ENCODE measurements at regions of chr11 and their contacts with region 1.

Region 1: DNA sequence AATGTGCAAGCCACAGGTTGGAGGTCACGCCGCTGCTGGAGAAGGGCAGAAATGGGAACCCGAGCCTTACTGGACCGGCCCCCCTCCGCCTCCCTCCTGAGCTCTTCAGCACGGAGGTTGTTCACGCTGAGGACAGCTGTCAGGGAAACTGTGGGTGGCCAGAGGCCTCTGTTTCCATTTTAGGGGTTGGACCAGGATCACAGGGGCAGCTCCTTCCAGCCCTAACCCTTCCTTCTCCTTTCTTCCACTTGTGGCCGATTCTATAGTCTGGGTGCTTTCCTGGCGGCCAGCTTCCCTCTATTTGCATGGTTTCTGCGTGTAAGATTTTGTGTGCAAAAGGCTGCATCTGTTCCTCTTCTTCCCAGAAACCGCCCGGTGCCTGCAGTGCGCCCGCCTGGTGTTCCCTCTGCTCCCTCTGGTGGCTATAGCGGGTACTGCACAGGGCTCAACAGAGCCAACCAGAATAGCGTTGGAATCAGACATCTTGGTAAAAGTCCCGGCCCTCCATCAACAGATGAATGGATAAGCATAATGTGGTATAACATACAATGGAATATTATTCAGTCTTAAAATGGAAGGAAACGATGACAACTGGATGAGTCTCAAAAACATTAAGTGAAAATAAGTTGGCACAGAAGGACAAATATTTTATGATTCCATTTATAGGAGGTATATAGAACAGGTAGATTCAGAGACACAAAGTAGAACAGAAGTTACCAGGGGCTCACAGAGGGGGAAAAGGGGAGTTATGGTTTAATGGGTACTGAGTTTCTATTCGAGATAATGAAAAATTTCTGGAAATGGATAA is 8.4 kb upstream of the SLC22A8 start:
- DNase-seq: peak; percentile 82
- ATAC-seq: peak; percentile 90
- H3K4me3 ChIP-seq: no peak overlapping the region
- H3K4me3 Mint-ChIP-seq: no peak overlapping the region
- H3K27ac ChIP-seq: no peak overlapping the region
- H3K27ac Mint-ChIP-seq: no peak overlapping the region
- H3K4me1 ChIP-seq: peaks cover 0 to 3% of the 10 kb centered on the region in 2 donors
- H3K4me1 Mint-ChIP-seq: peaks cover 4% of the 10 kb centered on the region
- H3K27me3 ChIP-seq: peaks cover 0 to 13% (median 0%) of the 10 kb centered on the region in 4 experiments
- H3K27me3 Mint-ChIP-seq: peaks cover 32% of the 10 kb centered on the region
- CTCF ChIP-seq: peak; percentile 100

Region 2: DNA sequence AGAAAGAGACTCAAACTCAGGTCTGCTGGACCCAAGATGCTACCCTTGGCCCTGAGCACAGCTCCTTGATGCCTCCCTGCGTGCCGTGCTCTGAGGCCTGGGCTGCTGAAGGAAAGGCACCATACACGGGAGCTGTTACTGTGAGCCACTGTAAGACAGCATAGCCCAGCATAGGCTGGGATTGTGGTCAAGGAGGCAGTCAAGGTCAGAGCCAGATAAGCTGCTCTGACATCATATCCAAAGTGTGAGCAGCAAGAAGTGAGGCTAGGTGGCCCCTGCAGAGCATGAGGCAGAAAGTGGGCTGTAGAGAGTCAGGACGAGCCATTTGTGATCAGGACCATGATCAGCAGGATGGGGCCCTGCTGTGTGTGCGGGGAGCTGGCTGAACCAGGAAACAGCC is 16.1 kb before region 1 on chr11:
- CTCF ChIA-PET with region 1: interaction called, 20 read pairs
- POLR2A ChIA-PET with region 1: no interaction called
- intact Hi-C with region 1: no loop called
- DNase-seq: no peak
- ATAC-seq: no peak
- H3K4me3 ChIP-seq: no peak overlapping the region
- H3K4me3 Mint-ChIP-seq: no peak overlapping the region
- H3K27ac ChIP-seq: no peak overlapping the region
- H3K27ac Mint-ChIP-seq: no peak overlapping the region
- H3K4me1 ChIP-seq: no peaks in the 10 kb centered on the region
- H3K4me1 Mint-ChIP-seq: no peaks in the 10 kb centered on the region
- H3K27me3 ChIP-seq: no peaks in the 10 kb centered on the region
- H3K27me3 Mint-ChIP-seq: peaks cover 21% of the 10 kb centered on the region
- CTCF ChIP-seq: no peak

Region 3: GRCh38 chr11:63132985-63133775 is 109.1 kb after region 1 on chr11:
- CTCF ChIA-PET with region 1: no interaction called
- POLR2A ChIA-PET with region 1: no interaction called
- intact Hi-C with region 1: no loop called
- DNase-seq: no peak
- ATAC-seq: no peak
- H3K4me3 ChIP-seq: no peak overlapping the region
- H3K4me3 Mint-ChIP-seq: no peak overlapping the region
- H3K27ac ChIP-seq: no peak overlapping the region
- H3K27ac Mint-ChIP-seq: no peak overlapping the region
- H3K4me1 ChIP-seq: no peaks in the 10 kb centered on the region
- H3K4me1 Mint-ChIP-seq: no peaks in the 10 kb centered on the region
- H3K27me3 ChIP-seq: peaks cover 0 to 8% (median 4%) of the 10 kb centered on the region in 4 experiments
- H3K27me3 Mint-ChIP-seq: peaks cover 55% of the 10 kb centered on the region
- CTCF ChIP-seq: no peak